ENCODE measurements at regions of chr1 and their contacts with region 1.

Region 1: DNA sequence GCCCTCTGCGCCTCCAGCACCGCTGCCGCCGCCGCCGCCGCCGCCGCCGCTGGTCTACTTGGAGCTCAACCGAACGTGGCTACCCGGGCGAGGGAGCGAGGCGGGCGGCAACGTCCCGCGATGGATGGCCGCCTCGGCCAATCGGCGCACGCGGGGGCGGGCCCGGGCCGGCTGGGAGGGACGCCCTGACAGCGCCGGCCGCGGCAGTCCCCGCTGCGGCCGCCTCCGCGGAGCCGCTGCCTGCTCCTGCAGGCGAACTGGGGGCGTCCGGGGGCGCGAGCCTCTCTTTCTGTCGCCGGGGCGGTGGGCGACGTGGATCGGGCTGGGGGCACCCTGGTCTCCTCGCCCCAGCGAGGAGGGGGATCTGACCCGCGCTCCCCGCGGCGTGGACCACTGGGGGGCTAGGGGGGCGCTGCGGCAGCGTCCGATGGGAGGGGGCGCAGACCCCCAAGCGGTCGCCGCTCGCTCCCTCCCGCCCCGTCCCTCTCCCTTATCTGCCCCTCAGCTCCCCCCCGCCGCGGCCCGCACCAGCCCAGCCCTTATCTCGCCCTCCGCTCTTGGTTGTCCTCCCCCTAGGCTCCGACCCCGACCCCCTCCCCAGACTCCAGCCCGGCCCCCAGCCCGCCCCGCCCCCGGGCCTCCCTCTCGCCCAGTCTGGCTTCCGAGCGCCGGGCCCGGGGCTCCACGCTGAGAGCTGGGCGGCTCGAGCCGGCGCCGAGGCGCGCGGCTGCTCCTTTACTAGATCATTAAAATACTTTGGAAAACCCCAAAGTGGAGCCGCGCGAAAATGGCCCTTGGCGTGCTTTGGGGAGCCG is at the start of gene SSBP3:
- DNase-seq: peak; percentile 92
- H3K4me3 ChIP-seq: peak within 1 kb of the TSS; percentile 63
- H3K27ac ChIP-seq: peak within 1 kb of the TSS; percentile 67
- H3K4me1 ChIP-seq: peaks cover 6% of the 10 kb centered on the region
- H3K27me3 ChIP-seq: no peaks in the 10 kb centered on the region
- CTCF ChIP-seq: no peak
- total RNA-seq, gene SSBP3: 43.0 and 55.1 TPM in 2 replicates

Region 2: DNA sequence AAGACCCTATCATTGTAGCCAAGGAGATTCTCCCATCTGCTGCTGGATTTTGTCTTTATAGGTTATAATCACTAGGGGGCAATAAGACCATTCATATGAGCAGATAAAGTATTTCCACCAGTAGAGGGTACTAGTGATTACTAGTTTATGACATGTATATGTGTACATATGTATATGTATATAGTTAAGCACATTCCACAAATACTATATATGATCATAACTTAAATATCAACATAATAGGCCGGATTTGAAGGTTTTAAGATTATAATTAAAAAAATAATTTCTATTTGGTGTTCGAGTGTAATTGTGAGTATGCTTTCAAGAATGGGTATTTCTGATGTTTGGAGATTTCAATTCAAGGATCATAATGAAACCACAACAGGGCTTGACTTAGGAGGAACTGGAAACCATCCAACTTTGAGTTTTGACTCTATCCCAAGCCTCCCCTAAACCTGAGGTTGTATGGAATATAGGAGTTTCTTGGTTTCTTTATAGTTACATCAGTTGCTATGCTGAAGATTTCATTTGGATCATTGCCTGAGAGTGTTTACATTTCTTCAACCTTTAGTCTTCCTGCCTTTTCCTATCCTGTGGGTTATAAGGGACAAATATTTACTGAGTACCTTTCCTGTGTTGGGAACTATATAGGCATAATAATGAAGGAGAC is 336.2 kb before region 1 on chr1:
- CTCF ChIA-PET with region 1: no interaction called
- POLR2A ChIA-PET with region 1: no interaction called
- intact Hi-C with region 1: loop called (anchors 10 kb)
- DNase-seq: peak; percentile 54
- H3K4me3 ChIP-seq: no peak overlapping the region
- H3K27ac ChIP-seq: no peak overlapping the region
- H3K4me1 ChIP-seq: no peaks in the 10 kb centered on the region
- H3K27me3 ChIP-seq: no peaks in the 10 kb centered on the region
- CTCF ChIP-seq: peak; percentile 75

Region 3: DNA sequence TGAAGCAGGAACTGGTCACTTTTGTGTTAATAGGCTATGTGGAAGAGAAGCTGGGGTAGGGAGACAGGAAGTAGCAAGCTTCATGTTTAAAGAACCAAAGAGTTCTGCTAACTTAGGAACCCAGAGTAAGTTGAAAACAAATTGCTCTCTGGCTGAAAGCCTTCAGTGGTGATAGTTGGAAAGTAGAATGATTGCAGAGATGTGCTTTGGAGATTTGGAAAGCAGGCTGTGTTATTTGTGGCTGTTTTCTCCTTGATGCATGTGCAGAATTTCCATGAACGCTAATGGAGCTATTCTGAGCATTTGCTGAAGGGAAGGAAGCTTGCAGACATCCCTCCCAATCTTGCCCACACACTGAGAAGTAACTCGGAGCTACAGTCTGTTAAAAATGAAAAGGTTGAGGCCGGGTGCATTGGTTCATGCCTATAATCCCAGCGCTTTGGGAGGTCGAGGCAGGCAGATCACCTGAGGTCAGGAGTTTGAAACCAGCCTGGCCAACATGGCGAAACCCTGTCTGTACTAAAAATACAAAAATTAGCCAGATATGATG is 307.4 kb before region 1 on chr1:
- CTCF ChIA-PET with region 1: no interaction called
- POLR2A ChIA-PET with region 1: no interaction called
- intact Hi-C with region 1: no loop called
- DNase-seq: no peak
- H3K4me3 ChIP-seq: no peak overlapping the region
- H3K27ac ChIP-seq: no peak overlapping the region
- H3K4me1 ChIP-seq: peaks cover 28% of the 10 kb centered on the region
- H3K27me3 ChIP-seq: no peaks in the 10 kb centered on the region
- CTCF ChIP-seq: no peak

Region 4: DNA sequence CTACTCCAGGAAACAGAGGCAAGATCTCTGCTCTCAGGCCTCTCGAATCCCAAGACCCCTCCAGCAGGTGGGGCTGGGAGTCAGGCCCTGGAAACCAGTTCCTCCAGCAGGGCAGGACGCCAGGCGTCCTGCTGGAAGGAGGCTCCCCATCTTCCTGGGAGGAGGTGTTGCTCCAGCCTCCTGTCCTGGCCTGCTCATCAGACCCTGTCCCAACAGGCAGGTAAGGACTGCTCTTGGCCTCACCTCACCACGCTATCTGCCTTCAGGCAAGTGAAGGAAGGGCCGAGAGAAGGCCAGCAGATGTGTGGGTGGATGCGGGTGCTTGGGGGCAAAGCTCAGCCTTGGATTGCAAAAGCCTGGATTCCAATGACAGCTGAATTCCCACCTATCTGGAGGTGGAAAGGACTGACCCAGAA is 83.2 kb before region 1 on chr1:
- CTCF ChIA-PET with region 1: no interaction called
- POLR2A ChIA-PET with region 1: no interaction called
- intact Hi-C with region 1: no loop called
- DNase-seq: no peak
- H3K4me3 ChIP-seq: no peak overlapping the region
- H3K27ac ChIP-seq: no peak overlapping the region
- H3K4me1 ChIP-seq: peaks cover 29% of the 10 kb centered on the region
- H3K27me3 ChIP-seq: no peaks in the 10 kb centered on the region
- CTCF ChIP-seq: no peak

Region 5: DNA sequence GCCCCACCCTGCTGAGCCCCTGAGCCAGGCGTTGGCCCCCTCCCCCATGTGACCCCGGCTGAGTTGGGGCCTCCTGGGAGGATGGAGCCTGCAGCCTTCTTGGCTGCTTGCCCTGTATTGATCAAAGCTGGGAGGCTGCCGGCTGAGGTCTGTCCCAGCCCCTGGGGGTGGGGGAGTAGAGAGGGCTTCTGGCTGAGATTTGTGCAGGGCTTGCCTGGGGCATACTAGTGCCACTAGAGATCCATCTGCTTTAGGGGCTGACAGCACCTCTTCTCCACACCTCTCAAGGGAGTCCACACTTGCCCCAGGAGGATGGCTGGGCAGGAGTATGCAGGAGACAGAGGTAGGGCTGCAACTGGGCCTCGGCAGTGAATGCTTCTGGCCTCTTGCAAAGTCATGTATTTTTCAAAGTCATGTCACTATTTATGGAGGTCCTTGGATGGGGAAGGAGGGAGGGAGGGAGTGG is 53.2 kb after region 1 on chr1:
- CTCF ChIA-PET with region 1: no interaction called
- POLR2A ChIA-PET with region 1: no interaction called
- intact Hi-C with region 1: loop called (anchors 5 kb)
- DNase-seq: peak; percentile 46
- H3K4me3 ChIP-seq: no peak overlapping the region
- H3K27ac ChIP-seq: no peak overlapping the region
- H3K4me1 ChIP-seq: peaks cover 44% of the 10 kb centered on the region
- H3K27me3 ChIP-seq: no peaks in the 10 kb centered on the region
- CTCF ChIP-seq: no peak

Measured in A673 (cell line).